ENCODE measurements at regions of chr22 and their contacts with region 1.

Region 1: DNA sequence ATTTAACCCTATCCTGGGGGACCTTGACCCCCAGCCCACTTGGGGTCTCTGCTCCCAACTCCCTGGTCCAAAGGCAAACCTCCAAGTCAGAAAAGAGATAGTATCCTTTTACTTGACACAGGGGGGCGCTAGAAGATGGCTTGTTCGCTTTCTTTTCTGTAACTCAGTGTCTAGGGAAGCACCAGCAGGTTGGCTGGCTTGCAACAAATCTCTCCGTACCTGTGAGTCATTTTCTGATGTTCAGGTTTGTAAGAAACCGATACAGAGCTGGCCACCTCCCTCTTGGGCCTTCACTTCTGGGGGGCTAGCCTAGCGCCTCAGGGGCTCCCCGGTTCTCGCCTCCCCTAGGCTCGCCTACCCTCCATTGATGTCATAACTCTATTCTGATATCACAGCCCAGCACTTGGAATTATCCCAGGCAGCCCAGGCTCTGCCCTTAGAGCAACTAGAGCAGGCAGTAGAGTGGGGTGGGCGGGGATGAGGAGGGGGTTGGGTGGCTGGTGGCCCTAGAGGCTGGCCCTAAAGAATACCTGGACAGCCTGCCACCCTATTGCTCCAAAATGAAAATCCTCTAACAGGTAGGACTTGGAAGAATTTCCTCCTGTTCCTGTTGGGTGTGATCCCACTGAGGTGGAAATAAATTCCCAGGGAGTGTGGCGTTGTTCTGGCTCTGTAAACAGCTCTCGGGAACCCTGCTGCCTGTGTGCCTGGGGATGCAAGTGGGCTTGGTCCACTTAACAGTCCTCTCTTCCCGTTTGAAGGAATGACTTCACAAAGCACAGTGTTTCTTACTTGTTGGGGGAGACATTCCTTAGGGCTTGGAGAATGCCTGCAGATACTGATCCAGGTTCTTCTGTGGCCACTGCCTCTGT is 69.4 kb downstream of the OSBP2 start:
- DNase-seq: peak; percentile 67 to 85 (median 79)
- H3K4me3 ChIP-seq: no peak overlapping the region
- H3K27ac ChIP-seq: no peak overlapping the region
- H3K4me1 ChIP-seq: peaks cover 0 to 8% of the 10 kb centered on the region in 2 donors
- H3K27me3 ChIP-seq: no peaks in the 10 kb centered on the region
- CTCF ChIP-seq: peak; percentile 45 to 81 (median 75)
- POLR2A ChIP-seq: no peak

Region 2: GRCh38 chr22:30705710-30706651 is 58.1 kb before region 1 on chr22:
- intact Hi-C with region 1: no loop called
- DNase-seq: peak in 6 of 7 donors; percentile 60 to 88 (median 74)
- H3K4me3 ChIP-seq: no peak overlapping the region
- H3K27ac ChIP-seq: peak overlapping the region in 3 of 5 donors; percentile 26 to 69 (median 61)
- H3K4me1 ChIP-seq: peaks cover 0 to 21% of the 10 kb centered on the region in 2 donors
- H3K27me3 ChIP-seq: no peaks in the 10 kb centered on the region
- CTCF ChIP-seq: no peak
- POLR2A ChIP-seq: peak in 1 of 2 donors; percentile 17

Region 3: GRCh38 chr22:30802202-30803166 is 38.4 kb after region 1 on chr22:
- intact Hi-C with region 1: no loop called
- DNase-seq: peak; percentile 85 to 91 (median 88)
- H3K4me3 ChIP-seq: peak overlapping the region in 1 of 4 donors; percentile 31
- H3K27ac ChIP-seq: no peak overlapping the region
- H3K4me1 ChIP-seq: peaks cover 12 to 20% of the 10 kb centered on the region in 2 donors
- H3K27me3 ChIP-seq: no peaks in the 10 kb centered on the region
- CTCF ChIP-seq: peak; percentile 15 to 84 (median 54)
- POLR2A ChIP-seq: peak in 1 of 2 donors; percentile 64

Region 4: DNA sequence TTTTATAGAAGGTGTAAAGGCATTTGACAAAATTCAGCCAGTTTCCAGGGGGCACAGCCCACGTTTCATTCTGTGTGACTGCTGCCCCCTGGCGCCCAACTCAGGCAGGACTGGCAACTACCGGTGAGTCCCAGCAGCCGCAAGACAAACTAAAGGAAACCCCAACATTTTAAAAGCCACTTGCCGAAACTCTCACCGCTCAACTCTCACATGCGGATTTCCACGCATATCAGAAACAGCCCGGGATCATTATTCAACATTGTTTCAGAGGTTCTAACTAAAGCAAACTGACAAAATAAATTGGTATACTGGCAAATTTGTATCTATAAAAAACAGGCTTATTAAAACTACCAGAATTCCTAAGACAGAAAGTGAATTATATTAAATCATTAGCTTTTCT is 156.4 kb after region 1 on chr22:
- intact Hi-C with region 1: loop called (anchors 2 to 5 kb)
- DNase-seq: peak; percentile 72 to 90 (median 78)
- H3K4me3 ChIP-seq: no peak overlapping the region
- H3K27ac ChIP-seq: no peak overlapping the region
- H3K4me1 ChIP-seq: peaks cover 0 to 13% of the 10 kb centered on the region in 2 donors
- H3K27me3 ChIP-seq: no peaks in the 10 kb centered on the region
- CTCF ChIP-seq: peak; percentile 67 to 92 (median 86)
- POLR2A ChIP-seq: no peak

Measured in adrenal gland (tissue), 19 donors.